CD4-positive, alpha-beta T cell (primary cell): ENCODE measurements at regions of chr7 and their contacts with region 1.

Region 1: DNA sequence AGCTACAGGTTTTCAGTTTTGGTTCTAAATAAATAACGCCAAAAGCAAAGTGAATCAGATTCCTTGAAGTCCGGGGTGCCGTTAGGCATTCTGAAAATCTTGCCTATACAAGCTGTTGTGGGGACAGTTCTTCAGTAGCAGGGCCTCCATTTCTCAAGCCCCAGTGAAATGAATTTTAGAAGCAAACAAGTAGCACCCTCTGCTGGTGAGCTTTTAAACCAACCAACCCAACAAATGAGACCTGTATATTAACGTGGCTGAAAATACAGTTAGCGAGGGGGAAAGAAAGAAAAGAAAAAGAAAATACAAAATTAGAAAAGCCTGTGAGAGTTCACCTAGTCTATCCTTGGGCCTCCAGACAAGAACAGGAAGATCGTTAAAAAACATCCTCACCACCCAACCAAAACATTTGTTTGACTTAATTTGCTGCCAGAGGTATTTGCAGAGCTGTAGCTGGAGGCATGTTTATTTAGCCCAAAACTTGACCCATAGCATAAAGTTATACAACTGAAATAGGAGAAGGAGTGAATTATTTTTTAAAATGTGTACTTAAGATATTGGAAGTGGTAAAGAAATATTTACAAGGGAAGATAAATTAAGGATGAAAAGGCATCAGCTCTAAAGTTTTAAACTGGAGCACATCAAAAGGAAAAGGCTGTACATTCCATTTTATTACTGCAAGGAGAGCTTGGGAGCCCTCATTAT is 98.9 kb downstream of the DYNC1I1 start:
- DNase-seq: peak in 3 of 14 experiments; percentile 5 to 14 (median 10)
- ATAC-seq: no peak
- H3K4me3 ChIP-seq: no peak overlapping the region
- H3K4me3 Mint-ChIP-seq: no peak overlapping the region
- H3K27ac ChIP-seq: no peak overlapping the region
- H3K27ac Mint-ChIP-seq: no peak overlapping the region
- H3K4me1 ChIP-seq: no peaks in the 10 kb centered on the region
- H3K4me1 Mint-ChIP-seq: no peaks in the 10 kb centered on the region
- H3K27me3 ChIP-seq: no peaks in the 10 kb centered on the region
- H3K27me3 Mint-ChIP-seq: peaks cover 19% of the 10 kb centered on the region
- CTCF ChIP-seq: peak; percentile 29

Region 2: GRCh38 chr7:95725205-95725604 is 146.0 kb before region 1 on chr7:
- CTCF ChIA-PET with region 1: no interaction called
- POLR2A ChIA-PET with region 1: no interaction called
- intact Hi-C with region 1: loop called in 1 of 2 experiments (anchors 5 kb)
- DNase-seq: no peak
- ATAC-seq: no peak
- H3K4me3 ChIP-seq: no peak overlapping the region
- H3K4me3 Mint-ChIP-seq: no peak overlapping the region
- H3K27ac ChIP-seq: no peak overlapping the region
- H3K27ac Mint-ChIP-seq: no peak overlapping the region
- H3K4me1 ChIP-seq: no peaks in the 10 kb centered on the region
- H3K4me1 Mint-ChIP-seq: no peaks in the 10 kb centered on the region
- H3K27me3 ChIP-seq: no peaks in the 10 kb centered on the region
- H3K27me3 Mint-ChIP-seq: peaks cover 5% of the 10 kb centered on the region
- CTCF ChIP-seq: no peak

Region 3: DNA sequence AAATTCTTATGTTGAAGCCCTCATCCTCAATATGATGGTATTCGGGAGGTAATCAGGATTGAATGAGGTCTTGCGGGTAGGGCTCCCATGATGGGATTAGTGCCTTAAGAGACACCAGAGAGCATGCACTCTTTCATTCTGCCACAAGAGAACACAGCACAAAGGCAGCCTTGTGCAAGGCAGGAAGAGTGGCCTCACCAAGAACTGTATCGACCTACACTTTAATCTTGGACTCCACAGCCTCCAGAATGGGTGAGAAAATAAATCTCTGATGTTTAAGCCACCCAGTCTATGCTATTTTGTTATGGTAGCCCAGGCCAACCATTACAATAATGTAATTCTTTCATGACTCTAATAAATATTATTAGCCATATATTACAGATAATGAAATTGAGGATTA is 830.0 kb after region 1 on chr7:
- CTCF ChIA-PET with region 1: no interaction called
- POLR2A ChIA-PET with region 1: no interaction called
- intact Hi-C with region 1: no loop called
- DNase-seq: no peak
- ATAC-seq: no peak
- H3K4me3 ChIP-seq: no peak overlapping the region
- H3K4me3 Mint-ChIP-seq: no peak overlapping the region
- H3K27ac ChIP-seq: no peak overlapping the region
- H3K27ac Mint-ChIP-seq: no peak overlapping the region
- H3K4me1 ChIP-seq: peaks cover 14% of the 10 kb centered on the region
- H3K4me1 Mint-ChIP-seq: peaks cover 90% of the 10 kb centered on the region
- H3K27me3 ChIP-seq: no peaks in the 10 kb centered on the region
- H3K27me3 Mint-ChIP-seq: no peaks in the 10 kb centered on the region
- CTCF ChIP-seq: no peak